AG04450 (cell line): ENCODE measurements at regions of chr1 and their contacts with region 1.

Region 1: GRCh38 chr1:11979851-11980675 is at the start of gene MFN2:
- DNase-seq: peak; percentile 90
- H3K4me3 ChIP-seq: peak within 1 kb of the TSS; percentile 92
- H3K27ac ChIP-seq: peak within 1 kb of the TSS; percentile 81
- H3K27me3 ChIP-seq: no peaks in the 10 kb centered on the region
- CTCF ChIP-seq: no peak
- polyA plus RNA-seq, gene MFN2: 43.9 and 53.9 TPM in 2 replicates

Region 2: DNA sequence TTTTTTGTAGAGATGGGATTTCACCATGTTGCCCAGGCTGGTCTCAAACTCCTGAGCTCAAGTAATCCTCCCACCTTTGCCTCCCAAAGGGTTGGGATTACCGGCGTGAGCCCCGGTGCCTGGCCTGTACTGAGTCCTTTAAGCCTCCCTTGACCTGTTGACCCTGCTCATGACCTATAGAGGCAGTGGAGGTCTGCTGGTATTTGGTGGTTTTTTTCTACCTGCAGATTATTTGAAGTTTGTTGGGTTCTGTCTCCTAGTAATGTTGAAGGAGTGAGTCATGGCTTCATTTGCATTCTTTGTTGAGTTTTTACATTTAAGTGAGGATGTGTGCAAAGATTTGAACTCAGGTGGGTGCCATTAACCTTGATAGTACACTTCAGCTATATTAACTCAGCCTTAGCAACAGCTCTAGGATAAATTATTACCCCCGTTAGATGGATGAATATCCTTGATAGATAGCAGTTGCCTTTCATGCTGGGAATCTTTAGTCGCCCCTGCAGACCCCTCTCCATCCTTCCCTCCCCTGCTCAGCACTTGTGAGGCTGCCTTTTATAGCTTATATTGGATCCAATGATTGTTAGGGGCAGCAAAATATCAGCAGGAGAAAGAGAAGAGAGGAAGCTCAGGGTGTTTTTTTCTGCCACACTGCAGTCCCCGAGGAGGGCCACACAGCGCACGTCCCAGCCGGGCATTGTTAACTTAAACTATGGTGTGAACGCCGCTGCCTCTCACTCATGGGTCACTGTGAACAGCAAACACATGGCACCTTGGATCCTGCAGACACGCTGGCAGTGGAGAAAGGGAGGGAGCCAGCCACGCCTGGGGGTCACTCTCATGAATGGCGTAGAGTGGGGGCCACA is 106.4 kb before region 1 on chr1:
- CTCF ChIA-PET with region 1: interaction called, 11 read pairs
- POLR2A ChIA-PET with region 1: no interaction called
- DNase-seq: no peak
- H3K4me3 ChIP-seq: no peak overlapping the region
- H3K27ac ChIP-seq: no peak overlapping the region
- H3K27me3 ChIP-seq: peaks cover 44% of the 10 kb centered on the region
- CTCF ChIP-seq: no peak

Region 3: DNA sequence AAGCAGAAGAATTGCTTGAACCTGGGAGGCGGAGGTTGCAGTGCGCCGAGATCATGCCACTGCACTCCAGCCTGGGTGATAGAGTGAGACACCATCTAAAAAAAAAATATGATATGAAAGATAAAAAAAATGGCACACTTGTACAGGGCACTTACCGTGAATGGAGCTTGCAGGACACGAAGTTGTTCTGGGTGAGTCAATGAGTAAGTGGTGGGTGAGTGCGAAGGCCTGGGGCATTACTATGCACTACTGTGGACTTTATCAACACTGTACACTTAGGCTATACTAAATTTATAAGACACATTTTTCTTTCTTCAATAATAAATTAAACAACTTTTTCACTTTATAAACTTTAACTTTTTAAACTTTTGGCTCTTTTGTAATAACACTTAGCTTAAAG is 120.0 kb after region 1 on chr1:
- CTCF ChIA-PET with region 1: no interaction called
- POLR2A ChIA-PET with region 1: no interaction called
- DNase-seq: no peak
- H3K4me3 ChIP-seq: no peak overlapping the region
- H3K27ac ChIP-seq: no peak overlapping the region
- H3K27me3 ChIP-seq: peaks cover 10% of the 10 kb centered on the region
- CTCF ChIP-seq: no peak